HEK293 (cell line): ENCODE measurements at regions of chr9 and their contacts with region 1.

Region 1: GRCh38 chr9:21029661-21030060 is 1.8 kb downstream of the HACD4 start:
- H3K4me3 ChIP-seq: no peak overlapping the region
- H3K27ac ChIP-seq: no peak overlapping the region
- H3K4me1 ChIP-seq: no peaks in the 10 kb centered on the region
- CTCF ChIP-seq: no peak

Region 2: GRCh38 chr9:19527663-19528062 is 1502.0 kb before region 1 on chr9:
- CTCF ChIA-PET with region 1: interaction called, 10 read pairs
- POLR2A ChIA-PET with region 1: no interaction called
- H3K4me3 ChIP-seq: no peak overlapping the region
- H3K27ac ChIP-seq: no peak overlapping the region
- H3K4me1 ChIP-seq: no peaks in the 10 kb centered on the region
- CTCF ChIP-seq: no peak